ENCODE measurements at regions of chr11 and their contacts with region 1.

Region 1: DNA sequence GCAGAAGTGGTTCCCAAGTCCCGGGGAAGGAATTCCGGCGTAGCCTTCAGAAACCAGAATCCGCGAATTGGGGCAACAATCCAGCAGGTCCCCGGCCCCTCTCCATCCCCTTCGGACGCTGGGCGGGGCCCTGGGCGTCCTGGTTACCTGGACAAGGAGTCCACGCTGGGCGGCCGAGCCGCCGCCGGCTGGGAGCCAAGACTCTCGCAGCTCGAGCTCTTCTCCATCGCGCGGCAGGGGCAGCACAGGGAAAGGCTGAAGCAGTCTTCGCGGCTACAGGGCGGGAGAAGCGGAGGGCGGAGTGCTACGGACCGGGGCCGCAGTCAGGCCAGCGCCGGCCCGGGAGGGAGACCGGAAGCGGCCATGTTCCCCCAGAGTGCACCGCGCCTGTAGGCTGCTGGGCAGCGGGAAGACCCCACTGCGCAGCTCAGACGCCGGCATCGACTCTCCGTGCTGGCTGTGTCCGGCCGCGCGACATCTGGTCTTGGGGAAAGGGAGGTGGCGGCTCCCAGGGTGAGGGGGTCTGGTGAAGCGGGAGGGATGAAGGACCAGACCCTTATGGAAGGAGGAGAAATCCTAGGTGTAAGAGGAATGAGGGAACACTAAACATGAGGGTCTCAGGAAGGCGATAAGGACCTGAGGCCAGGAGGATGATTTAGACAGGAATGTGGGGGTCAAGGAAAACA is at the start of gene MTMR2:
- DNase-seq: peak; percentile 29 to 40 (median 33)
- H3K4me3 ChIP-seq: peak within 1 kb of the TSS; percentile 88 to 93
- H3K4me3 Mint-ChIP-seq: peak within 1 kb of the TSS; percentile 90 to 96 (median 94)
- H3K27ac ChIP-seq: peak within 1 kb of the TSS; percentile 58
- H3K27ac Mint-ChIP-seq: peak within 1 kb of the TSS; percentile 75 to 98 (median 94)
- H3K4me1 ChIP-seq: peaks cover 26% of the 10 kb centered on the region
- H3K4me1 Mint-ChIP-seq: peaks cover 23 to 32% (median 27%) of the 10 kb centered on the region in 4 donors
- H3K27me3 ChIP-seq: no peaks in the 10 kb centered on the region
- H3K27me3 Mint-ChIP-seq: peaks cover 0 to 2% of the 10 kb centered on the region in 2 donors
- total RNA-seq, gene MTMR2: 13.4 to 13.6 TPM

Region 2: DNA sequence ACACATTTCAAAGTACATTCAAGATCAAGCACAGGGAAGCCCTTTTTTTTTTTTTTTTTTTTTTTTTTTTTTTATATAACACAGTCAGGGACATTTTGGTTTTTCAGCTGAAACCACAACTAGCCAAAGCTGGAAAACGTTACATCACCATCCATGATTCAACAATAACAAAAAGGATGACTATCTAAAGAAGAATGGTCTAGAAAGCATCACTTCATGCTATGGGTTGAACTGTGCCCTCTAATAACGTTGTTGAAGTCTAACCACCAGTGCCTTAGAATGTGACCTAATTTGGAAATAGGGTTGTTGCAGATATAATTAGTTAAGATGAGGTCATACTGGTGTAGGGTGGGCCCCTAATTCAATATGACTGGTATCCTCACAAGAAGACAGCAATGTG is 46.6 kb before region 1 on chr11:
- CTCF ChIA-PET with region 1: no interaction called
- POLR2A ChIA-PET with region 1: interaction called, 4 read pairs
- intact Hi-C with region 1: loop called (anchors 1 kb)
- DNase-seq: no peak
- H3K4me3 ChIP-seq: no peak overlapping the region
- H3K4me3 Mint-ChIP-seq: no peak overlapping the region
- H3K27ac ChIP-seq: no peak overlapping the region
- H3K27ac Mint-ChIP-seq: no peak overlapping the region
- H3K4me1 ChIP-seq: no peaks in the 10 kb centered on the region
- H3K4me1 Mint-ChIP-seq: peaks cover 0 to 2% (median 0%) of the 10 kb centered on the region in 4 donors
- H3K27me3 ChIP-seq: no peaks in the 10 kb centered on the region
- H3K27me3 Mint-ChIP-seq: no peaks in the 10 kb centered on the region

Region 3: GRCh38 chr11:95908826-95909225 is 15.0 kb before region 1 on chr11:
- CTCF ChIA-PET with region 1: no interaction called
- POLR2A ChIA-PET with region 1: no interaction called
- intact Hi-C with region 1: no loop called
- DNase-seq: no peak
- H3K4me3 ChIP-seq: no peak overlapping the region
- H3K4me3 Mint-ChIP-seq: no peak overlapping the region
- H3K27ac ChIP-seq: no peak overlapping the region
- H3K27ac Mint-ChIP-seq: no peak overlapping the region
- H3K4me1 ChIP-seq: no peaks in the 10 kb centered on the region
- H3K4me1 Mint-ChIP-seq: peaks cover 7 to 17% (median 8%) of the 10 kb centered on the region in 4 donors
- H3K27me3 ChIP-seq: no peaks in the 10 kb centered on the region
- H3K27me3 Mint-ChIP-seq: no peaks in the 10 kb centered on the region

Region 4: GRCh38 chr11:95948637-95949036 is 24.8 kb after region 1 on chr11:
- CTCF ChIA-PET with region 1: no interaction called
- POLR2A ChIA-PET with region 1: no interaction called
- intact Hi-C with region 1: no loop called
- DNase-seq: no peak
- H3K4me3 ChIP-seq: no peak overlapping the region
- H3K4me3 Mint-ChIP-seq: no peak overlapping the region
- H3K27ac ChIP-seq: no peak overlapping the region
- H3K27ac Mint-ChIP-seq: no peak overlapping the region
- H3K4me1 ChIP-seq: no peaks in the 10 kb centered on the region
- H3K4me1 Mint-ChIP-seq: no peaks in the 10 kb centered on the region
- H3K27me3 ChIP-seq: no peaks in the 10 kb centered on the region
- H3K27me3 Mint-ChIP-seq: peaks cover 0 to 4% of the 10 kb centered on the region in 2 donors

Measured in CD4-positive, alpha-beta memory T cell (primary cell).